ENCODE measurements at regions of chr7 and their contacts with region 1.

Region 1: DNA sequence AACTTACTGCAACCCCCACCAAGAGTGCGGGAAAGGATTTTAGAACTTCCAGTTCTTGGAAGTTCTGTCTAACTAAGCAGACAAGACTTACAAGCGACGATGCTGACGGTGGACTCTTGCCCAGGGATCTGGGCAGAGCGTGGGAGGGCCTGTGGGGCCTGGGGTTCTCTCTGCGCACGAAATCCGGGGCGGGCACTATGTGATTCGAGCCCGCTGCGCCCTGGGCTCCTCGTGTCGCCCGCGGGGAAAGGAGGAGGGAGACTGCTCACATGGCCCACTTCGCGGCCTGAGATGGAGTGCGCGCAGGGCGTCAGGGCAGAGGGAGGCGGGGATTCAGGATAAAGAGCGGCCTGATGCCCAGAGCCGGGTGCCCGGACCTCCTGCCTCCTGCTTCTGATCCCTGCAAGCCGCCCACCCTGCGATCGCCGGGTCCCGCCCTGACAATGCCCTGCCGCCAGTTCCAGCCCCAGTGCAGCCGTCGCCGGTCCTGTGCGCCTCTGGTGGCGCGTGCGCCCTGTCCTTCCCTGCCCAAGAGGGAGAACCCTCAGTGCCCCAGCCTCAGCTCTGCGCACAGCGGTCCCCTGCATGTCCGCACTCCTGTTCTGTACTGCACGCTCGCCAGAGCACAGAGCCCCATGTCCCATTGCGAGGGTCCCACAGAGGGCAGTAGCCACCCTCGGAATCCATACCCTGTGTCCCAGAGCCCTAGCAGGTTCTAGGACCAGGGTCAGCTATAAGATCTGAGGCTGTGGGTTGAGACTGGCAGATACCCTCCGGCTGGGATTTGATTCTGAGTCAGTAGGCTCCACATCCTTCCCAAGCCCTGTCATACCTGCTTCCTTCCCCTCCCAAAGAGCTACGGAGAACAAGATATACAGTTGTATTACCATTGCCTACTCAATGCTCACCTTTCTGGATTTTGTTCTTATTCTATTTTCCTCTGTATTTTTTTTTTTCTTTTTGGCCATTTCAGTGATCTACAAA is 99.4 kb upstream of the TMEM106B start:
- DNase-seq: peak; percentile 29
- H3K4me3 Mint-ChIP-seq: peak overlapping the region; percentile 65
- H3K27ac Mint-ChIP-seq: no peak overlapping the region
- H3K4me1 Mint-ChIP-seq: peaks cover 10% of the 10 kb centered on the region
- H3K27me3 Mint-ChIP-seq: peaks cover 22% of the 10 kb centered on the region

Region 2: GRCh38 chr7:12291870-12292269 is 180.2 kb after region 1 on chr7:
- CTCF ChIA-PET with region 1: interaction called, 3 read pairs
- intact Hi-C with region 1: loop called (anchors 5 kb)
- DNase-seq: peak; percentile 17
- H3K4me3 Mint-ChIP-seq: no peak overlapping the region
- H3K27ac Mint-ChIP-seq: no peak overlapping the region
- H3K4me1 Mint-ChIP-seq: peaks cover 5% of the 10 kb centered on the region
- H3K27me3 Mint-ChIP-seq: peaks cover 5% of the 10 kb centered on the region

Measured in activated naive CD4-positive, alpha-beta T cell treated with anti-CD3 and anti-CD28 coated beads for 36 hours (primary cell).